ENCODE measurements at regions of chr7 and their contacts with region 1.

Region 1: GRCh38 chr7:123734498-123734897 is 14.3 kb downstream of the WASL start:
- DNase-seq: no peak
- ATAC-seq: no peak
- H3K4me3 ChIP-seq: no peak overlapping the region
- H3K27ac ChIP-seq: no peak overlapping the region
- H3K4me1 ChIP-seq: peaks cover 9% of the 10 kb centered on the region; the same call in 1 of the 2 replicates
- H3K27me3 ChIP-seq: no peaks in the 10 kb centered on the region
- CTCF ChIP-seq: no peak

Region 2: GRCh38 chr7:123901044-123901443 is 166.5 kb after region 1 on chr7:
- CTCF ChIA-PET with region 1: no interaction called
- POLR2A ChIA-PET with region 1: no interaction called
- intact Hi-C with region 1: no loop called
- DNase-seq: peak; percentile 69
- ATAC-seq: peak; percentile 97
- H3K4me3 ChIP-seq: no peak overlapping the region
- H3K27ac ChIP-seq: no peak overlapping the region
- H3K4me1 ChIP-seq: peaks cover 5% of the 10 kb centered on the region; the same call in 1 of the 2 replicates
- H3K27me3 ChIP-seq: no peaks in the 10 kb centered on the region
- CTCF ChIP-seq: no peak

Region 3: DNA sequence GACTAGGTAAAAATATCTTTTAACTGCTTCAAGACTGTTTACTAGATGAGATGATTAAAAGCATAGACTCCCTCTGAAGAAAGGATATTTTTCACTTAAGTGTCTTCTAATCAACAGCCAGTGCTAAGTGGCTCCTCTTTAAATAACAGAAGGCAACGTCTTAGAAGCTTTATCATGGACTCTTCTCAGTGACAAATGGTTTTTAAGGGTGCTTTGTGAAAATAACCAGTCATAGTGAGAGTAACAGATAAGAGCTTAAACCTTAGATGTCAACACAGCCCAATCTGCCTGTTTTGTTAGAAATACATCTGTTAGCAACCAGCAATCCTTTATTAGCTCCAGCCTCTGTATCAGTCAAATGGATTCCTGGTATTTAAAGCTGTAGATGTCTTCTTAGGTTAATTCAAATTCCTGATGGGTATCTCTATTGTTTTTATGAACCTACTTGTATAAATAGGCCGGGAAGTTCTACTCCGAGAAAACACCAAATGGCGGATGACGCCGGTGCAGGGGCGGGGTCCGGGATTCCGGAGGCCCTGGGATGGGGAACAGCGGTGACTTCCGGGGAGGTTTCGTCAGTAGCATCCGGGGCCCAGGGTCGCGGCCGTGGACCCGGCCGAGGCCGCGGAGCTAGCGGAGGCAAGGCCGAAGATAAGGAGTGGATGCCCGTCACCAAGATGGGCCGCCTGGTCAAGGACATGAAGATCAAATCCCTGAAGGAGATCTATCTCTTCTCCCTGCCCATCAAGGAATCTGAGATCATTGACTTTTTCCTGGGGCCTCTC is 745.7 kb after region 1 on chr7:
- CTCF ChIA-PET with region 1: no interaction called
- POLR2A ChIA-PET with region 1: interaction called, 13 read pairs
- intact Hi-C with region 1: no loop called
- DNase-seq: no peak
- ATAC-seq: no peak
- H3K4me3 ChIP-seq: no peak overlapping the region
- H3K27ac ChIP-seq: no peak overlapping the region
- H3K4me1 ChIP-seq: peaks cover 16% of the 10 kb centered on the region
- H3K27me3 ChIP-seq: no peaks in the 10 kb centered on the region
- CTCF ChIP-seq: no peak

Measured in PC-3 (cell line).